K562 (cell line): ENCODE measurements at regions of chr7 and their contacts with region 1.

Region 1: GRCh38 chr7:93086748-93087147 is 31.0 kb downstream of the SAMD9 start:
- DNase-seq: peak in 1 of 4 experiments; percentile 1
- ATAC-seq: peak; percentile 35; the same call in 1 of the 3 replicates
- H3K4me3 ChIP-seq: no peak overlapping the region
- H3K27ac ChIP-seq: no peak overlapping the region
- H3K4me1 ChIP-seq: no peaks in the 10 kb centered on the region
- H3K27me3 ChIP-seq: 0 out of 5 replicates have a peak, but pooled peaks cover 0 to 5% of the 10 kb centered on the region in 2 experiments
- CTCF ChIP-seq: no peak
- EP300 ChIP-seq: no peak
- POLR2A ChIP-seq: no peak
- RAD21 ChIP-seq: no peak

Region 2: GRCh38 chr7:93108003-93108402 is 21.3 kb after region 1 on chr7:
- CTCF ChIA-PET with region 1: no interaction called
- POLR2A ChIA-PET with region 1: no interaction called
- in situ Hi-C with region 1: no loop called
- intact Hi-C with region 1: no loop called
- DNase-seq: no peak
- ATAC-seq: no peak
- H3K4me3 ChIP-seq: no peak overlapping the region
- H3K27ac ChIP-seq: no peak overlapping the region
- H3K4me1 ChIP-seq: peaks cover 0 to 3% of the 10 kb centered on the region in 2 experiments; a peak in 2 of 5 replicates
- H3K27me3 ChIP-seq: no peaks in the 10 kb centered on the region; a peak in 1 of 5 replicates
- CTCF ChIP-seq: no peak
- EP300 ChIP-seq: no peak
- POLR2A ChIP-seq: no peak
- RAD21 ChIP-seq: no peak

Region 3: DNA sequence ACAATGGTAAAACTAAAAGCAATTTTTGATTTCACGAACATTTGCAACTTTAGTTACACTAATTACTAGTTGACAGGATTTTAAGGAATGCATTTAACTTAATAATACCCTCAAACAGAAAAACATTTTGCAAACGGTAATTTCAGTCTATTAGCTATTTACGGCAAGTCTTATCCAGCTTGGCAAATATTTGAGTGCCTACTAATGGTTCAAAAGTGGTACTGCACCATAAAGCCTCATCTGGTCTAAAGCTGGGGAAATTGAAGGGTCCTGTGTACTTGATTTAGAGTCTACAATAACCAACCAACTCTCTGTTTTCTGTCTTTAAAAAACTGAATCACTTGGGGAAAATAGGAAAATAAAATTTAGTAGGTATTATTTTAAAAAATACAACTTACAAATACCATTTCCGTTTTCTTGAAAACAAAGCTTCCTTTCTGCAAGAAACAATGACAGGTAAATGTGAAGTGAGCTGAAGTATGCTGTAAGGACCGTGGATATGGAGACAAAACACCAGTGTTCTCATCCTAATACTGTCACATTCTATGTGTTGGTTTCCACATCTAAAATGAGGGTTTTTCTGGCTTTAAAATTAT is 287.7 kb after region 1 on chr7:
- CTCF ChIA-PET with region 1: no interaction called
- POLR2A ChIA-PET with region 1: no interaction called
- in situ Hi-C with region 1: no loop called
- intact Hi-C with region 1: loop called (anchors 10 kb)
- DNase-seq: peak; percentile 17 to 44 (median 26)
- ATAC-seq: peak; percentile 92
- H3K4me3 ChIP-seq: no peak overlapping the region
- H3K27ac ChIP-seq: no peak overlapping the region
- H3K4me1 ChIP-seq: no peaks in the 10 kb centered on the region
- H3K27me3 ChIP-seq: no peaks in the 10 kb centered on the region
- CTCF ChIP-seq: peak; percentile 38 to 81 (median 80); a peak in 5 of 6 replicates
- EP300 ChIP-seq: no peak
- POLR2A ChIP-seq: no peak
- RAD21 ChIP-seq: peak; percentile 58 to 80